ENCODE measurements at regions of chr7 and their contacts with region 1.

Region 1: DNA sequence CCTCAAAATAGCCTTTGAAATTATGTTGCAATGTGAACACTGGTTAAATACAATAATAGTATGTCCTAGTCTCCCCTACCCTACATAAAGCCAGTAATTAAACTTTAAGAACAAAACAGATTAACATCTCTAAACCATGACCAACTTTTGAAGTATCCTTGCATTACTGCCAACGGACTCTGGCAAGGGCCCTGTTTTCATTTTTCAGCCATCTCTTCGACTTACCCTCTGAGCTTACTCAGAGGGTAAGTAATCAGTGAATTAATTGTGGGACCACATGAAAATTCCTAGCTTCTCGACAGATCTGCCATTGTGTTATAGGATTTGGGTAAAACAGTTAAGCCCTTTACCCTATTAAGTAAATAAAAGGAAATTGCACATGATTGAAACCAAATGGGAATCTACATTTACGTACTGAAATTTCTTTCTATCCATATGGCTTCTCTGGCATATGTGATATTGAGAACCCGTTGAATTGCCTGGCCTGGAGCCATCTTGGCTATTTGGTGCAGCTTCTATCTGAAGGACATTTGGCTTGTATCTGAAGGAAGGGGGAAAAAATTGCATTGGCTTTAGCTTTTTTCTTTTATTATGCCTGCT is 39.6 kb downstream of the DYNC1I1 start:
- DNase-seq: no peak
- H3K4me3 ChIP-seq: no peak overlapping the region
- H3K27ac ChIP-seq: no peak overlapping the region
- H3K4me1 ChIP-seq: no peaks in the 10 kb centered on the region
- H3K27me3 ChIP-seq: no peaks in the 10 kb centered on the region
- CTCF ChIP-seq: no peak
- POLR2A ChIP-seq: no peak

Region 2: GRCh38 chr7:95840953-95841950 is 29.3 kb after region 1 on chr7:
- CTCF ChIA-PET with region 1: interaction called, 11 read pairs
- POLR2A ChIA-PET with region 1: no interaction called
- dilution Hi-C with region 1: no loop called
- intact Hi-C with region 1: no loop called
- DNase-seq: no peak
- H3K4me3 ChIP-seq: no peak overlapping the region
- H3K27ac ChIP-seq: no peak overlapping the region
- H3K4me1 ChIP-seq: no peaks in the 10 kb centered on the region
- H3K27me3 ChIP-seq: no peaks in the 10 kb centered on the region
- CTCF ChIP-seq: peak; percentile 19 to 31
- POLR2A ChIP-seq: no peak

Region 3: DNA sequence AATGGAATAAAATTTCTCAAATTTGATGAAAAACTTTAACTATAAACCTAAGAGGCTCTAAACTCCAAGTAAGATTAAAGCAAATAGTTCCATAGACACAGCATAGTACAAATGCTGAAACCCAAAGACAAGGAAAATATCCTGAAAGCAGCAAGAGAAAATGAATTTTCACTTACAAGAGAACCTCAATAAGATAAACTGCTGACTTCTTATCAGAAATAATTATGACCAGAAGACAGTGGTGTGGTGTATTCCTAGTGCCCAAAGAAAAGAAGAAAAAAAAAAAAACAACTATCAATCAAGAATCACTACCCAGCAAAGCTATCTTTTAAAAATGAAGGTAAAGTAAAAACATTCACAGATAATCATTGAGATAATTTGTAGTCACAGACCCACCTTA is 66.7 kb after region 1 on chr7:
- CTCF ChIA-PET with region 1: no interaction called
- POLR2A ChIA-PET with region 1: no interaction called
- dilution Hi-C with region 1: no loop called
- intact Hi-C with region 1: no loop called
- DNase-seq: no peak
- H3K4me3 ChIP-seq: no peak overlapping the region
- H3K27ac ChIP-seq: no peak overlapping the region
- H3K4me1 ChIP-seq: peaks cover 16% of the 10 kb centered on the region
- H3K27me3 ChIP-seq: no peaks in the 10 kb centered on the region
- CTCF ChIP-seq: no peak
- POLR2A ChIP-seq: no peak